Aorta (tissue), 5 donors: ENCODE measurements at regions of chr5 and their contacts with region 1.

Region 1: GRCh38 chr5:129945028-129945427 is 40.8 kb downstream of the CHSY3 start:
- DNase-seq: no peak
- ATAC-seq: no peak
- H3K4me3 ChIP-seq: no peak overlapping the region
- H3K27ac ChIP-seq: peak overlapping the region; percentile 7 to 25
- H3K4me1 ChIP-seq: no peaks in the 10 kb centered on the region
- H3K27me3 ChIP-seq: no peaks in the 10 kb centered on the region

Region 2: GRCh38 chr5:129899454-129899853 is 45.6 kb before region 1 on chr5:
- intact Hi-C with region 1: no loop called
- DNase-seq: no peak
- ATAC-seq: no peak
- H3K4me3 ChIP-seq: no peak overlapping the region
- H3K27ac ChIP-seq: no peak overlapping the region
- H3K4me1 ChIP-seq: no peaks in the 10 kb centered on the region
- H3K27me3 ChIP-seq: no peaks in the 10 kb centered on the region

Region 3: GRCh38 chr5:129912601-129913255 is 32.3 kb before region 1 on chr5:
- intact Hi-C with region 1: loop called in 1 of 2 experiments (anchors 5 kb)
- DNase-seq: no peak
- ATAC-seq: no peak
- H3K4me3 ChIP-seq: no peak overlapping the region
- H3K27ac ChIP-seq: no peak overlapping the region
- H3K4me1 ChIP-seq: peaks cover 0 to 4% of the 10 kb centered on the region in 2 donors
- H3K27me3 ChIP-seq: no peaks in the 10 kb centered on the region

Region 4: GRCh38 chr5:129996896-129997295 is 51.9 kb after region 1 on chr5:
- intact Hi-C with region 1: no loop called
- DNase-seq: no peak
- ATAC-seq: no peak
- H3K4me3 ChIP-seq: no peak overlapping the region
- H3K27ac ChIP-seq: no peak overlapping the region
- H3K4me1 ChIP-seq: peaks cover 0 to 2% of the 10 kb centered on the region in 2 donors
- H3K27me3 ChIP-seq: no peaks in the 10 kb centered on the region